ENCODE measurements at regions of chr3 and their contacts with region 1.

Region 1: DNA sequence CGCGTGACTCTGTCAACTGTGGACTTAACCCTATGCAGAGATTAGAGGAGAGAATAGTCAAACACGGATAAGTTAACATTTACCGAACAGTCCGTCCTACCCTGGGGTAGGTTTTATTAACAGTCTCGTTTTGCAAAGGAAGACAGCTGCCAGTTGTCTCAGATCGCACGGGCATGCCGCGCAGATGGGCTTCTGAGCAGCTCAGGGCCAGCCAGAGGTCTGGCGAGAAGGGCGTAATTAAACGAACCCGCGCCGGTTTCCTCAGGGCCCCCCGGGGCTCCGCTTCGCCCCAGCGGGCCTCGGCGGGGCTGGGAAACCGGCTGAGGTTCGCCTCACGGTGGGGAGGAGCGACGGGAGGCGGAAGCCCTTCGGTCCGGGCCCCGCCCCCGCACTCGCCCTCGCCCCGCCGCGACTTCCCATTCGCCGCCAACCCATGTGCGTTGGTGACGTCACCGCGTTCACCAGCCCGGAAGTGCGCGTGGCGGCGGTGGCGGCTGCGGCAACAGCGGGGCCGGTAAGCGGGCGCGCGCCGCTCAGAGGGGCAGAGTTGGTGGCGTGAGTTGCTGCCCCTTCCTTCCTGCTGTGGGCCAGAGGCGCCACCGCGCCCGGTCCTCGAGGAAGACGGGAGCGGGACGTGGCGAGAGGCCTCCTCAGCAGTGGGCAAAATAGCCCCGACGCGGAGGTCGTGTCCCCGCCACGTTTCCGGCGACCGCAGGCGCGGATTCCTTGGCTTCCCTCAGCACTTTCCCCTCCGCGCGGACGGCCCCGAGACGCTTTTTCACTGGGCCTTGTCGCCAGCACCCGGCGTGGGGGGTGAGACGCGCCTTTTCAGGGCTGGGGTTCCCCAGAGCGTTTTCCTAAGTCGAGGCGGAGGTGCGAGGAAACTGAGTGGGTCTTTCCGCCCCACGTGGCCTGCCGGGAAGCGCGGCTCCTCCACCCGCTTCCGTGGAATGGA is at the start of gene TRNT1:
- DNase-seq: peak; percentile 92 to 97
- H3K4me3 ChIP-seq: peak within 1 kb of the TSS; percentile 81 to 91 (median 81)
- H3K27ac ChIP-seq: peak within 1 kb of the TSS; percentile 90 to 92
- H3K4me1 ChIP-seq: peaks cover 2 to 7% of the 10 kb centered on the region in 2 donors
- H3K27me3 ChIP-seq: no peaks in the 10 kb centered on the region
- CTCF ChIP-seq: no peak
- POLR2A ChIP-seq: peak; percentile 41
- total RNA-seq, gene TRNT1: 16.0 to 24.0 (median 19.0) TPM

Region 2: GRCh38 chr3:3110299-3110630 is 16.5 kb before region 1 on chr3 and contains the start of gene IL5RA:
- intact Hi-C with region 1: loop called (anchors 1 kb)
- DNase-seq: no peak
- H3K4me3 ChIP-seq: no peak within 1 kb of the TSS
- H3K27ac ChIP-seq: no peak within 1 kb of the TSS
- H3K4me1 ChIP-seq: no peaks in the 10 kb centered on the region
- H3K27me3 ChIP-seq: no peaks in the 10 kb centered on the region
- CTCF ChIP-seq: no peak
- POLR2A ChIP-seq: no peak
- total RNA-seq, gene IL5RA: 0.48 to 0.98 TPM in 2 of 3 donors, not detected in the other

Measured in breast epithelium (tissue), 4 donors.